HAP-1 (cell line): ENCODE measurements at regions of chr22 and their contacts with region 1.

Region 1: DNA sequence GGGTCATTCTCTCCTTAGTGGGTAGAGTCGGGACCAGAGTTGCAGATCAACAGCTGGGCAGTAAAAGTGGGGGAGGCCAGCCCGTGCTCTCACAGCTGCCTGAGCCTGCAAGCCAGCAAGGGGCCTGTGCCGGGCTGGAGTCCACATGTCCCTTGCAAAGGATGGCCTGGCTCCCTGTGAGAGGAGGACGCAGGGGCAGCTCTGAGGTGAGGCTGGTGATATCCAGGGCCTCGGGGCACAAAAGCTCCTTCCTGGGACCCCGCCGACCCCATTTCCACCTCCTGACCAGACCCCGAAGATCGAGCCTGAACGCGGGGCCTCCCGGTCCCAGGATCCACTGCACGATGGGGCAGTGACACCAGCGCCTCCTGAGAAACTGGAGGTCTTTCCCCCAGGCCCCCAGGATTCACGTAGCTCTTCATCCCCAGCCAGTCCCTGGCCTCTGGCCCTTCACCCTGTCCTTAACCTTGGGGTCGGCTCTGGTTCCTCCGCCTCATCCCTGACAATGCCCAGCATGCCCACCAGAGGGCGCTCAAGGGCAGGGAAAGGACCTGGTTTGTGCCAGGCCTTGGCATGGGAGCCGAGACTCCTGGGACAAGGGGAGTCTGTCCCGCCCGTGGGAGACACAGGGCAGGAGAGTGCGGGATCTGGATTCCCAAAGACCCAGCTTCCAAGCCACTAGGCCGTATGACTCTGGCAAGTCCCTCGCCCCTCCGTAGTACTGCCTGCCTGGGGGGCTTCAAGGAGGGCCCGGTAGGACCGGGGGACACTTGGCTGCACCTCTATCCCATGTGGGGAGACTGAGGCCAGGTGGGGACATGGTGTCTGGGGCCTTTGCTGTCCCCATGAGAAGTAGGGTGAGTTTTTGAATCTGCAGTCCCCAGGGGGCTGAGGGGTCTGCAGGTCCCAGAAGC is 17.8 kb upstream of the WNT7B start:
- DNase-seq: peak; percentile 47 to 93
- H3K4me3 ChIP-seq: no peak overlapping the region
- H3K4me1 ChIP-seq: peaks cover 6% of the 10 kb centered on the region
- H3K27me3 ChIP-seq: no peaks in the 10 kb centered on the region

Region 2: DNA sequence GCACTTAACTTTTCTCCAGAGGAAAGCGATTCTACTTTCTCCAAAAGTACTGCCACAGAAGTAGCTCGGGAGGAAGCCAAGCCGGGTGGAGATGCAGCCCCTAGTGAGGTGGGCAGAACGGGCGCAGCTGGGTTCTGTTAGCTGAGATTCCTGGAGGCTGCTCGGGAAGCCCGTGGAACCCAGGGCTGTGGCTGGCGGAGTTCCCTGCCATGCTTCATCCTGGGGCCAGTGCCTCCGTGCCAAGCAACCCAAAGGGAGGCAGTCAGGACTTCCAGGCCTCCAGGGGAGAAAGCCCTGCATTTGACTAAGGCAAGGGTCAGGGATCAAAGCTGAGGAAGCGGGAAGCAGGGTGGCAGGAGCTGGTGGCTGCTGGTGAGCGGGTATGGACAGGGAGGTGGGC is 334.0 kb after region 1 on chr22:
- in situ Hi-C with region 1: loop called (anchors 10 kb)
- DNase-seq: no peak
- H3K4me3 ChIP-seq: no peak overlapping the region
- H3K4me1 ChIP-seq: no peaks in the 10 kb centered on the region
- H3K27me3 ChIP-seq: no peaks in the 10 kb centered on the region